Activated CD4-positive, alpha-beta T cell treated with anti-CD3 and anti-CD28 coated beads, Interleukin-2, amount 10 ng/mL, durations not matched to agents 24 days and 14 days (primary cell): ENCODE measurements at regions of chr15 and their contacts with region 1.

Region 1: GRCh38 chr15:23039151-23039916 is at the start of gene TUBGCP5:
- DNase-seq: peak; percentile 99
- H3K4me3 Mint-ChIP-seq: peak within 1 kb of the TSS; percentile 91
- H3K27ac Mint-ChIP-seq: peak within 1 kb of the TSS; percentile 94
- H3K4me1 Mint-ChIP-seq: peaks cover 23% of the 10 kb centered on the region
- H3K27me3 Mint-ChIP-seq: no peaks in the 10 kb centered on the region
- total RNA-seq, gene TUBGCP5: 23.1 and 26.3 TPM in 2 replicates

Region 2: DNA sequence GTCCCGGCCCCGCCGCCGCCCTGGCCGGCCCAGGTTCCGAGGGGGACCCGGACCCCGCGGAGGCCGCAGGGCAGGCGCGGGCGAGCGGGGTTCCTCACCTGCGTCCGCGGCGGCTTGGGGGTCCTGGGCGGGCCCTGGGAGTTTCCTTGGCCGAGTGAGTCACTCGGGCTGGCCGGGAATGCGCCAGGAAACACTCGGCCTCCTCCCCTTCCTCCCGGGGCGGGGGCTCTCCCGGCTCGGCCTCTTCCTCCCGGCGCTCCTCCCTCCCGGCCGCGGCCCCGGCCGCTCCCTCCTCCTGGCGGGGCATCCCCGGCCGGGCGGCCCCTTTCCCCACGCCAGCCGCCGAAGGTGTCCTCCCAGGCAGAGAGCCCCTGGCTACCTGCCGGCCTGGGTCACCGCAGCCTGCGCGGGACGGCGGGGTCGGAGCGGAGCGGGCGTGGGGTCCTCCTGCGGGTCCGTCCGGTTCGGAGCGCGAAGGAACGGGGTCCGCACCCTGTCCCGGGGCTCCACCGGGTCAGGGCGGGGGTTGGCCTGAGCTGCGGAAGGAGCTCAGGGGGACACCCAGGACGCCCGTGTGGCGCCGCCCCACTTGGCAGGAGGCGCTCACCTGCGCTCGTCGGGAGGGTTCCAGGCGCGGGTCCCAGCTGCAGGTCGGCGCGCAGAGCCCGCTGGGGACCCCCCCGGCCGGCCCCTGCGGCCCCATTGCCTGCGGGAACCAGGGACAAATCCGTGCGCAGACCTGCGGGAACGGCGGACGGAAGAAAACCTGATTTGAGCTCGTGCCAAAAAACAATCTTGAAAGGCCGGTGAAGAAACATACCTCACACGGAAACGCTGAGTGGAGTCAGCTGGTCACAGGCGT is 58.9 kb before region 1 on chr15 and contains the start of gene CYFIP1:
- intact Hi-C with region 1: loop called (anchors 1 kb)
- DNase-seq: peak; percentile 81
- H3K4me3 Mint-ChIP-seq: peak within 1 kb of the TSS; percentile 98
- H3K27ac Mint-ChIP-seq: peak within 1 kb of the TSS; percentile 77
- H3K4me1 Mint-ChIP-seq: peaks cover 12% of the 10 kb centered on the region
- H3K27me3 Mint-ChIP-seq: peaks cover 22% of the 10 kb centered on the region
- total RNA-seq, gene CYFIP1: 56.7 and 60.8 TPM in 2 replicates

Region 3: DNA sequence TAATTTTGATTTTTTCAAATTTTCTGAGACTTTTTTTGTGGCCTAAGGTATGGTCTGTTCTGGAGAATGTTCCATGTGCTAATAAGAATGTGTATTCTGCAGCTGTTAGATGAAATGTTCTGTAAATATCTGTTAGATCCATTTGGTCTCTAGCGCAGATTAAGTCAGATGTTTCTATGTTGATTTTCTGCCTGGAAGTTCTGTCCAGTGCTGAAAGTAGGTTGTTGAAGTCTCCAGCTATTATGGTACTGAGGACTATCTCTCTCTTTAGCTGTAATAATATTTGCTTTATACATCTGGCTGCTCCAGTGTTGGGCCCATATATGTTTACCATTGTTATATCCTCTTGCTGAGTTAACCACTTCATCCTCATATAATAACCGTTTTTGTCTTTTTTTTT is 13.2 kb after region 1 on chr15:
- intact Hi-C with region 1: no loop called
- DNase-seq: no peak
- H3K4me3 Mint-ChIP-seq: no peak overlapping the region
- H3K27ac Mint-ChIP-seq: no peak overlapping the region
- H3K4me1 Mint-ChIP-seq: no peaks in the 10 kb centered on the region
- H3K27me3 Mint-ChIP-seq: peaks cover 7% of the 10 kb centered on the region

Region 4: DNA sequence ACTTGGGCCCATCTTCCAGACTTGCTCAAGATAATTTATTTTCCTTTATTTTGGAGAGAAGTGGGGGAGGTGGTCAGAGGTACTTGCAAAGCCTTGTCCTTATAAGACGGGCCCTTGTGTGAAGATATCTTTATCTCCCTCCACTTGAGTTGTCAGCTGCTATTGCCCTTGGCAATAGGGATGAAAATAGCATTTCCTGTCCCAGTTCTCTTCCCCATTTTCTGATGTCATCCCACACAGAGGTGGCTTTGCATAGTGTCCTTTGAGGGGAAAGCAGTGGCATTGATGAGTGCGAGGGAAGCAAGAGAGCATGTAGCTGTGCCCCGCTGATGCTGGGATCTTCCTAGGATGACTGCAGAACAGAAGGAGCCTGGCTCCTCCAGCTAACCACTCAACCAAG is 41.9 kb after region 1 on chr15:
- intact Hi-C with region 1: no loop called
- DNase-seq: no peak
- H3K4me3 Mint-ChIP-seq: no peak overlapping the region
- H3K27ac Mint-ChIP-seq: no peak overlapping the region
- H3K4me1 Mint-ChIP-seq: no peaks in the 10 kb centered on the region
- H3K27me3 Mint-ChIP-seq: peaks cover 1% of the 10 kb centered on the region

Region 5: GRCh38 chr15:23467110-23467600 is 427.8 kb after region 1 on chr15:
- intact Hi-C with region 1: loop called (anchors 10 kb)
- DNase-seq: no peak
- H3K4me3 Mint-ChIP-seq: no peak overlapping the region
- H3K27ac Mint-ChIP-seq: no peak overlapping the region
- H3K4me1 Mint-ChIP-seq: no peaks in the 10 kb centered on the region
- H3K27me3 Mint-ChIP-seq: peaks cover 1% of the 10 kb centered on the region